Breast epithelium (tissue), 4 donors: ENCODE measurements at regions of chr1 and their contacts with region 1.

Region 1: DNA sequence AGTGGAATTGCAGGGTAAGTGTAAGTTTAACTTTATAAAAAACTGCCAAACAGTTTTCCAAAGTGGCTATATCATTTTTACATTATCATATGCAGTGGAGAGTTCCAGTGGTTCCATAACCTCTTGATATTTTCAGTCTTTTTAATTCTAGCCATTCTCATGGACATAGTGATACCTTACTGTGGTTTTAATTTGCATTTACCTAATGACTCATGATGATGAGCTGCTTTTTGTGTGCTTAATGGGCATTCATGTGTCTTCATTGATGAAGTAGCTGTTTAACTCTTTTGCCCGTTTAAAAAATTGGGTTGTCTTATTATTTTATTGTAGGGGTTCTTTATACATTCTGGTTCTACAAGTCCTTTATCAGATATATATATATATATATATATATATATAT is 29.4 kb downstream of the SNX27 start:
- DNase-seq: no peak
- H3K4me3 ChIP-seq: no peak overlapping the region
- H3K27ac ChIP-seq: no peak overlapping the region
- H3K4me1 ChIP-seq: no peaks in the 10 kb centered on the region
- H3K27me3 ChIP-seq: no peaks in the 10 kb centered on the region
- CTCF ChIP-seq: no peak
- POLR2A ChIP-seq: no peak

Region 2: GRCh38 chr1:151686561-151686960 is 45.3 kb after region 1 on chr1:
- intact Hi-C with region 1: loop called (anchors 2 kb)
- DNase-seq: no peak
- H3K4me3 ChIP-seq: no peak overlapping the region
- H3K27ac ChIP-seq: no peak overlapping the region
- H3K4me1 ChIP-seq: no peaks in the 10 kb centered on the region
- H3K27me3 ChIP-seq: no peaks in the 10 kb centered on the region
- CTCF ChIP-seq: no peak
- POLR2A ChIP-seq: no peak

Region 3: GRCh38 chr1:151739590-151740375 is 98.6 kb after region 1 on chr1:
- intact Hi-C with region 1: no loop called
- DNase-seq: peak; percentile 72 to 83
- H3K4me3 ChIP-seq: peak overlapping the region in 1 of 3 donors; percentile 7
- H3K27ac ChIP-seq: peak overlapping the region; percentile 56 to 57
- H3K4me1 ChIP-seq: no peaks in the 10 kb centered on the region
- H3K27me3 ChIP-seq: no peaks in the 10 kb centered on the region
- CTCF ChIP-seq: peak in 1 of 3 donors; percentile 7
- POLR2A ChIP-seq: no peak